Panc1 (cell line): ENCODE measurements at regions of chr17 and their contacts with region 1.

Region 1: DNA sequence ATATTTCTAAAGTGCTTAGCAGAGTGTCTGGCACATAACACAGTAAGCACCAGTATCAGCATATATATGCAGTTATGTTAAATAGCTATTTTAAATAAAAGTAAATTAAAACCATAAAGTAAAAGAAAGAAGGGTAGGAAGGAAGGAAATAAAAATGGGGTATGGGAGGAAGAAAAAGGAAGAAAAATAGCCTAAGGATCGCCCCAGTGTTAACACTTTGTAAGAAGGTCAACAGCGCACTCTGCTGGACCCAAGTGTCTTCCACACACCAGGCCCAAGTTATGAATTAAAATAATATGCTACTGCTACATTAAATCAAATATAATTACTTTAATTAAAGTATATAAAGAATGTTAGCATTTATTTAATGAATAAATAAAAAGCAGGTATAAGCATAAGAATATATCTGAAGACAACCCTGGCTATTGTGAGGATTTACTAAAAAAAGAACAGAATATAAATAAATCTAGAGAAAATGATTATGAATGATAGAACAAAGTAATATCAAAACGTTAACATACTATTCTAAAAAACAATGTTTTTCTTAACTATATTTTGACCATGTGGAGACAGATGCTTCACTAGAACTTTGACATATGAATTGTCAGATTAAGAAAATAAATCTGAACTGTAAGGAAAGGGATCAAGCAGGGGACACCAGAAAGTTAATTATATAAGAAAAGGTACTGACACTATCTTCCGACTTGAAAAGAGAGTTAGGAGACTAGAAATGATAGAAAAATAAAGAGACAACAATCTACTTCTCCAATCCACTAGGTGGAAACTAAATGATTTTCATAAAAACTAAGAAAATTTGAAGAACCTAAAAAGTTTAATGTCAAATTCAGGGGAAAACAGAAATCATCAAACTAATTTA is 25.9 kb downstream of the BRIP1 start:
- DNase-seq: peak; percentile 12
- ATAC-seq: peak; percentile 87; the same call in 1 of the 2 replicates
- H3K4me3 ChIP-seq: no peak overlapping the region
- H3K27ac ChIP-seq: no peak overlapping the region
- H3K4me1 ChIP-seq: peaks cover 12% of the 10 kb centered on the region; the same call in 1 of the 2 replicates
- H3K27me3 ChIP-seq: no peaks in the 10 kb centered on the region
- CTCF ChIP-seq: peak; percentile 82; the same call in 1 of the 2 replicates

Region 2: DNA sequence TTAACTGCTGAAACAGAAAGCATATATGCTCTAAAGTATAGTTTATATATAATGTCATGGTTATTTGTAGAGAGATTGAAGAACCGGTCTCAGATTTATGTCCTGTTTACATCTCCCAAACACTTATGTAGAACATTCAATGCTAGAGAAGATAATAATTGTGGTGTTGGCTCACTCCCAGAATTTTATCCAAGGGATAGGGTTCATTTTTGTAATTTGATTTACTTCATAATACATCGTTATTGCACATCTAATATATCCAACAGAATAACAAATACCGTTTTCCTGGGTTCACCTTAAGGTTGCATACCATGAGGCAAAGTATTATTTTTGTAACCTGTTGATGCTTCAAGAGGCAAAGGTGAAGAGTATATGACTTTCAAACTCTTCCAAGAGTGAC is 640.6 kb before region 1 on chr17:
- CTCF ChIA-PET with region 1: no interaction called
- POLR2A ChIA-PET with region 1: interaction called, 11 read pairs
- in situ Hi-C with region 1: no loop called
- intact Hi-C with region 1: no loop called
- DNase-seq: no peak
- ATAC-seq: no peak
- H3K4me3 ChIP-seq: no peak overlapping the region
- H3K27ac ChIP-seq: peak overlapping the region; percentile 52
- H3K4me1 ChIP-seq: peaks cover 23% of the 10 kb centered on the region
- H3K27me3 ChIP-seq: no peaks in the 10 kb centered on the region
- CTCF ChIP-seq: no peak

Region 3: GRCh38 chr17:61426013-61426730 is 411.2 kb before region 1 on chr17:
- CTCF ChIA-PET with region 1: no interaction called
- POLR2A ChIA-PET with region 1: interaction called, 10 read pairs
- in situ Hi-C with region 1: no loop called
- intact Hi-C with region 1: no loop called
- DNase-seq: no peak
- ATAC-seq: peak; percentile 83
- H3K4me3 ChIP-seq: no peak overlapping the region
- H3K27ac ChIP-seq: no peak overlapping the region
- H3K4me1 ChIP-seq: no peaks in the 10 kb centered on the region
- H3K27me3 ChIP-seq: no peaks in the 10 kb centered on the region; the same call in 1 of the 2 replicates
- CTCF ChIP-seq: peak; percentile 60

Region 4: DNA sequence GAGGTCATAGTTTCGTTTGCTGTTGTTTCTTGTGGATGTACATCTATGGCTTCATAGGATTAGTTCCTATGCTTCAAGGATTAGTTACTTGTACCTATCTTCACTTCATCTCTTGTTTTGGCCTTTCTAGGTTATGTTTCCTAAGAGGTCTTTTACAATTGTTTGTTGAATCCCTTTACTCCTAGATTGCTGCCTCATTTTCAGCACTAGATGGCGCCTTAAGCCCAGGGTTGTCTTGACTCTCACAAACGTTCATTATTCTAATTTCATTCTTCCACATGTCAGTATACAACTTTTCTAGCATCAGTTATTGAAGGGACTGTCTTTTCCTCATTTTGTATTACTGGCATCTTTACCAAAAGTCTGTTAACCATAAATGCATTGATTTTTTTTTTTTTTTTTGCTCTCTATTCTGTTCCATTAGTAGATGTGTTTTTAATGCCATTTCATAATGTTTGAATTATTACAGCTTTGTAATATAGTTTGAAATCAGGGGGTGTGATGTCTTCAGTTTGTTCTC is 201.4 kb before region 1 on chr17:
- CTCF ChIA-PET with region 1: interaction called, 9 read pairs
- POLR2A ChIA-PET with region 1: no interaction called
- in situ Hi-C with region 1: no loop called
- intact Hi-C with region 1: loop called (anchors 1 kb)
- DNase-seq: peak; percentile 47
- ATAC-seq: peak; percentile 85
- H3K4me3 ChIP-seq: no peak overlapping the region
- H3K27ac ChIP-seq: no peak overlapping the region
- H3K4me1 ChIP-seq: no peaks in the 10 kb centered on the region
- H3K27me3 ChIP-seq: no peaks in the 10 kb centered on the region
- CTCF ChIP-seq: peak; percentile 78

Region 5: DNA sequence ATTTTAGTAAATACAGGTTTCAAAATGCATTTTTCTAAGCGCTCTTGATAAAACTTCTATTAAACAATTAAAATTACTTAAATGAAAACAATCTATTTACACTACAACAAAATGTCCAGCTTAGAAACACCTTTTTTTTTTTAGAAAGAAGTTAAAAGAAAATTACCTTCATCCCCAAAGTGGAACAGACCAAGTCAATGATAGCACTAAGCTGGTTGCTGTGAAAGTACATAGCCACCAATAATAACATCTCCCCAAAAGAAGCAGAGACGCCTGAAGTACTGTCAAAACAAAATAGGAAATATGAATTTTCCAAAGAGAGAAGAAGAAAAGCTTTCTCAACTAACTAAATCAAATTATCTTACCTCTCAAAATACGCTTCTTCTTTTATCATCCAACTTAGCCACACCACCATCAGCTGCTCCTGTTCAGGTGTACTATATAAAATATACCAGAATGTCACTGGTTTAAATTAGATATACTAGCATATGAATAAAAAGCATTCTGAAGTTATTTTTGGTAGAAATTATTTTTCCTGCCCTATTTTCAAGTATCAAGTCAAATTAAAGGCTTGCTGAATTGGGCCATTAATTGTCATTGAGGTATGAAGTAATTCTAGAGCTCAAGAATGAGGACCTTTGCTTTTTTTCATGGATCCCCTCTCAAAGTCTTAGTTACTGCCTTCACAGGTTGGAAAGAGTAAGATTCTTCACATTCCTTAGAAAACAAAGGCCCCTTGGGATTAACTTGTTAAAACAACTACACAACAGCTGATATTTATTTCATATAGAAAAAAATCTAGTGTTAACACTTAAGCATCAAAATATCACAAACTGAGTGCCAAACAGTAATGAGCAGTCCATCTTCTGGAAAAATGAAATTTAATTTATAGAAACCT is 60.1 kb after region 1 on chr17:
- CTCF ChIA-PET with region 1: no interaction called
- POLR2A ChIA-PET with region 1: no interaction called
- in situ Hi-C with region 1: no loop called
- intact Hi-C with region 1: no loop called
- DNase-seq: no peak
- ATAC-seq: no peak
- H3K4me3 ChIP-seq: no peak overlapping the region
- H3K27ac ChIP-seq: no peak overlapping the region
- H3K4me1 ChIP-seq: no peaks in the 10 kb centered on the region
- H3K27me3 ChIP-seq: no peaks in the 10 kb centered on the region
- CTCF ChIP-seq: no peak